PC-9 (cell line): ENCODE measurements at regions of chr9 and their contacts with region 1.

Region 1: DNA sequence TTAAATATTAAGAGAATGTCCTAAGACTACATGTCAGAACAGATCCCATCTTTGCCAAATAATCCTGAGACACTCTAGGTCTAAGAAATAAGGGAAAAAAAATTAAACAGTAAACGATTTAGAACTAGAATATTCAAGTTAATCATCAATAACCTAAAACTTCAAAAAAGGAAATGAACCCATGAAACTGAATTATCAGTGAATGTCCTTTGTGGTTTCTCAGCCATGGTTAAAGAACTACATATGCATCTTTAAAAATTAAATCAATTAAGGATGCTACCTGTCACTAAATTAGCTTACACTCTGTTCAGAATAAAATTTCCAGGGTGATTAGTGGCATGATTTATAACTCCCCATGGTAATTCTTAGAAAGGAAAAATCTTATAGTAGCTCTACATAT is 850.0 kb upstream of the C9orf72 start:
- DNase-seq: no peak
- H3K4me3 ChIP-seq: no peak overlapping the region
- H3K27ac ChIP-seq: no peak overlapping the region
- H3K4me1 ChIP-seq: no peaks in the 10 kb centered on the region
- H3K27me3 ChIP-seq: no peaks in the 10 kb centered on the region
- CTCF ChIP-seq: no peak

Region 2: DNA sequence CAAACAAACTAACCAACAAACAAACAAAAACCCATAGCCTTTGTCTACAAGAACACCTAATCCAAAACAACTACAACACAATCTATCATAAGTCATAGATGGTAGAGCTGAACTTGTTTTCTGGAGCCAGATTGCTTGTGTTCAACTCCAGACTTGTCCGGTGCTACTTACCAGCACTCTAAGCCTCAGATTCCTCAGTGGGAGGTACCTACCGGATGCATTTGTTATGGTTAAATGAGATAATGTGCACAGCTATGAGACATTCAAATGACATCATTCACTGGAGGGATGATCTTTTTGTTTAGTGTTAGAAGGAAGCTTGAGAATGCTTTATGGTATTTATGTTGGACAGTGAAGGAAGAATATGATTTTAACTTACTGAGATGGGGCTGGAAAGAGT is 257.1 kb before region 1 on chr9:
- CTCF ChIA-PET with region 1: no interaction called
- POLR2A ChIA-PET with region 1: interaction called, 11 read pairs
- intact Hi-C with region 1: no loop called
- DNase-seq: no peak
- H3K4me3 ChIP-seq: no peak overlapping the region
- H3K27ac ChIP-seq: no peak overlapping the region
- H3K4me1 ChIP-seq: no peaks in the 10 kb centered on the region
- H3K27me3 ChIP-seq: no peaks in the 10 kb centered on the region
- CTCF ChIP-seq: no peak

Region 3: DNA sequence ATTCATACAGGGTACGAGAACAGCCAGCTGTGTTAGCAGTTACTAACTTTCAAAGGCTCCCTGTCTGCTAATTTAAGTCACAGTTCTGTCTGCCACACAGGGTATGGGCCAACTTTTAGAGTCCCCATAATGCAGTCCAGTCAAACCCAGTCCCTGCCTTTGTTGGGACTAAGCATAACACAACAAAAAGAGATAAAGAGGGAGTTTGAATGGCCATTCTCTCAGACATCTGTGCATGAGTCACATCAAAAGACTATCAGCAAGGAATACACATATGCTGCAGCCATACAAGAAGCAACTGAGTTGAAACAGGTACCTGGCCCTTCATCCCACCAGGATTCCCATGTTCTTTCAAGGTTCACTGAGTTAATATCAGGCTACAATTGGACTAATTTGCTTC is 105.5 kb before region 1 on chr9:
- CTCF ChIA-PET with region 1: no interaction called
- POLR2A ChIA-PET with region 1: no interaction called
- intact Hi-C with region 1: no loop called
- DNase-seq: no peak
- H3K4me3 ChIP-seq: no peak overlapping the region
- H3K27ac ChIP-seq: no peak overlapping the region
- H3K4me1 ChIP-seq: no peaks in the 10 kb centered on the region
- H3K27me3 ChIP-seq: no peaks in the 10 kb centered on the region
- CTCF ChIP-seq: no peak

Region 4: DNA sequence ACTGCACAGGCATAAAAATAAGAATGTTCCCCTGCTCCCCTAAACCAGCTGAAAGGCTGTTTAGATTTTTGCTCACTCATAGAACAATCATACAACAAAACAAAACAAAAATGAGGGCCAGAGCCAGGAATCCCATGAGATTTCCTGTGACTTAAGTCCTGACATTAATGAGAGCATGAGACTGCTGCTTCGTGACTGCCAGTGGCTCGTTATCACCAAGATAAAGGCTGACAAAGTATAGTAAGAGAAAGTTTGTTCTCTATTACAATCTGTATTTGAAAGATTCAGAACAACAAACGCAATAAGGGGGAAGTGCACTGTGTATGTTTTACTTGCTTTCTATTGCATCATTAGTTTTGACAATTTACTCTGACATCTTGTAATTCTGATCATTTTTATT is 12.8 kb before region 1 on chr9:
- CTCF ChIA-PET with region 1: no interaction called
- POLR2A ChIA-PET with region 1: no interaction called
- intact Hi-C with region 1: no loop called
- DNase-seq: no peak
- H3K4me3 ChIP-seq: no peak overlapping the region
- H3K27ac ChIP-seq: no peak overlapping the region
- H3K4me1 ChIP-seq: no peaks in the 10 kb centered on the region
- H3K27me3 ChIP-seq: no peaks in the 10 kb centered on the region
- CTCF ChIP-seq: no peak